ENCODE measurements at regions of chr10 and their contacts with region 1.

Region 1: GRCh38 chr10:125797994-125798662 is 22.5 kb upstream of the MMP21 start:
- DNase-seq: no peak
- H3K4me3 ChIP-seq: no peak overlapping the region
- H3K27ac ChIP-seq: no peak overlapping the region
- H3K4me1 ChIP-seq: no peaks in the 10 kb centered on the region
- H3K27me3 ChIP-seq: no peaks in the 10 kb centered on the region
- CTCF ChIP-seq: no peak

Region 2: DNA sequence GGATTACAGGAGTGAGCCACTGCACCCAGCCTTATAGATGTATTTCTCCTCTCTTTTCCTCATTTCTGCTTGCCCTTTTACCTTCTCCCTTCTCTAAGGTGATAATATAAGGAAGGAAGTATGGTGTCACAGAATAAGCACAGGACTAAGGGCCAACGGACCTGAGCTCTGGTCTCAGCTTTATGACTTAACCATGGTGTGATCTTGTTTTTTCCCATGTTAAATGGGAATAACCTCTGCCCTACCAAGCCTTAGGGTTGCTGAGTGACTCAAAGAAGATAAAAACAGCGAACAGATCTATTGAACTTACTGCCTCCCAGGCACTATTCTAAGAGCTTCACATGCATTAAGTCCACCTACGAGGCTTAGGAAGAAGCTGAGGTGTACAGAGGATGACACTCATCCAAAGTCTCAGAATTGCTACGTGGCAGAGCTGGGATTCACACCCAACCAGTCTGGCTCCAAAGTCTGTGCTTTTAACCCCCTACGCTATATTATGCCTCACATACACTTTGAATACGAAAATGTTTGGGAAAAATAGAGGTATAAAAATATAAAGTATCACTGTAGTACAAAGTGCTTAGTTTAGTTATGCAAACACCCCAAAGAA is 19.3 kb after region 1 on chr10:
- CTCF ChIA-PET with region 1: interaction called, 3 read pairs
- POLR2A ChIA-PET with region 1: interaction called, 11 read pairs
- intact Hi-C with region 1: no loop called
- DNase-seq: no peak
- H3K4me3 ChIP-seq: no peak overlapping the region
- H3K27ac ChIP-seq: no peak overlapping the region
- H3K4me1 ChIP-seq: no peaks in the 10 kb centered on the region
- H3K27me3 ChIP-seq: no peaks in the 10 kb centered on the region
- CTCF ChIP-seq: no peak

Region 3: DNA sequence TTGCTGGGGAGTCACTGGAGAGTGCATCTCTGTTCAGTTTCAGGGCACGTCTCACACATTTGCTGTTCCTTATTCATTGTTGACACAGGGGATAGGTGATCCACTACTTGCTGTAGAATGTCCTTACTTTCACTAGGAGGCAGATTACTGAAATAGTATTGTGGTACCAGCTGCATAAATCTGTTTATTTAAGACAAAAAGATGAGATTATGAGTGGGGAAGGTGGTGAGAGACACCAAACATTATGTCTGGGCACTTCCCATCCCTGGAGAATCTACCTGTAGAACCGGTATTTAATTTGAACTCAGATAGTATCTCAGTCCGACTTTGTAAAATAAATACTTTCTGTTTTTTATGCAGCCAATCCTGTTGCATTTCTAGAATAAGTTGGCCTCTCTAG is 38.5 kb after region 1 on chr10:
- CTCF ChIA-PET with region 1: no interaction called
- POLR2A ChIA-PET with region 1: interaction called, 26 read pairs
- intact Hi-C with region 1: no loop called
- DNase-seq: no peak
- H3K4me3 ChIP-seq: no peak overlapping the region
- H3K27ac ChIP-seq: no peak overlapping the region
- H3K4me1 ChIP-seq: 0 out of 2 replicates have a peak, but pooled peaks cover 7% of the 10 kb centered on the region
- H3K27me3 ChIP-seq: no peaks in the 10 kb centered on the region
- CTCF ChIP-seq: no peak

Region 4: GRCh38 chr10:126551202-126551601 is 753.1 kb after region 1 on chr10:
- CTCF ChIA-PET with region 1: no interaction called
- POLR2A ChIA-PET with region 1: interaction called, 36 read pairs
- intact Hi-C with region 1: no loop called
- DNase-seq: no peak
- H3K4me3 ChIP-seq: no peak overlapping the region
- H3K27ac ChIP-seq: no peak overlapping the region
- H3K4me1 ChIP-seq: no peaks in the 10 kb centered on the region
- H3K27me3 ChIP-seq: no peaks in the 10 kb centered on the region
- CTCF ChIP-seq: no peak